GM12878 (cell line): ENCODE measurements at regions of chr4 and their contacts with region 1.

Region 1: DNA sequence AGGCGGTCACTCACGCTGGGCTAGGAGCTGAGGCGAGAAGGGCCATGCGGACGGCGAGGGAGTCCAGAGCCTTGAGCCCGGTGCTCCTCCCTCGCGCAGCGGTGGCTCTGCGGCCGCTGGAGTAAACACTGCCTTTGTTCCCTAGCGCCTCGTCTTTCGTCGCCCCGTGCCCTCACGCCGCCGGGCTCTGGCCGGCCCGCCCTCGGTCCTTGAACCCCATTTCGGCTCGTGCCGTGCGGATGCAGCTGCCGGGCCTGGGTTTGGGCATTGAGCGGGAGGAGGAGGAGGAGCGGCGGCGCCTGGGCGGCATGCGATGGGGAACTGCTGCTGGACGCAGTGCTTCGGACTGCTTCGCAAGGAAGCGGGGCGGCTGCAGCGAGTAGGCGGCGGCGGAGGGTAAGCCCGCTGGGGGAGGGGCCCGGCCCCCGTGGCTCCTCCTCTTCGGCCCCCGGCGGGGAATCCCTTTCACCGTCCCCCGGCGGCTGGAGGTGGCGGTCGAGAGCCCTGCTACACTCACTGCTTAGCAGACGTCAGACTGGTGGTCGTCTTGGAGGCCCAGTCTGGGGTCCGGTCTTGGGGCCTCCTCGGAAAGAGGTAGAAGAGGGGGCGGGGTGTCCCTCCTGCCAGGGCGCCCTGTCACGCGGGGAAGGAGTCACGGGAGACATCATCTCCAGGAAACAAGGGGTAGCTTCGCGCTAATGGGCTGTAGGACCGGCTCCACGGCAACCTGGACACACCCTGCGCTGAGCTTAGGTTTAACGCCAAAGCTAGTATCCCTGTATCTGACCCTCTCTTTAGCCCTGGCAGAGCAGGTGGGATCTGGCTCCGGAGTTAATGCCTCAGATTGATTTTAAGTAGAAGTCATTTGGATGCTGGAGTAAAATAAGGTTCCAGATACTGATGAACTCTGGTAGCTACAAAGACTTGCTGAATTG is at the start of gene AP1AR:
- DNase-seq: peak; percentile 35
- ATAC-seq: peak; percentile 82
- H3K4me3 ChIP-seq: peak within 1 kb of the TSS; percentile 88
- H3K27ac ChIP-seq: peak within 1 kb of the TSS; percentile 93
- H3K4me1 ChIP-seq: no peaks in the 10 kb centered on the region
- H3K27me3 ChIP-seq: no peaks in the 10 kb centered on the region
- CTCF ChIP-seq: peak; percentile 40 to 61 (median 52)
- EP300 ChIP-seq: no peak
- POLR2A ChIP-seq: peak; percentile 94
- RAD21 ChIP-seq: peak; percentile 28; the same call in 1 of the 2 replicates
- polyA plus RNA-seq, gene AP1AR: 5.6 to 7.2 TPM

Region 2: GRCh38 chr4:112099701-112100297 is 132.2 kb before region 1 on chr4:
- CTCF ChIA-PET with region 1: interaction called, 135 read pairs
- POLR2A ChIA-PET with region 1: interaction called, 3 read pairs
- RAD21 ChIA-PET with region 1: interaction called, 90 read pairs
- SMC1A ChIA-PET with region 1: interaction called, 71 read pairs
- in situ Hi-C with region 1: no loop called
- intact Hi-C with region 1: loop called (anchors 1 kb)
- DNase-seq: peak; percentile 27
- ATAC-seq: peak; percentile 93
- H3K4me3 ChIP-seq: no peak overlapping the region
- H3K27ac ChIP-seq: no peak overlapping the region
- H3K4me1 ChIP-seq: no peaks in the 10 kb centered on the region
- H3K27me3 ChIP-seq: no peaks in the 10 kb centered on the region
- CTCF ChIP-seq: peak; percentile 35 to 66 (median 50); a peak in 5 of 6 replicates
- EP300 ChIP-seq: no peak
- POLR2A ChIP-seq: no peak
- RAD21 ChIP-seq: peak; percentile 75

Region 3: DNA sequence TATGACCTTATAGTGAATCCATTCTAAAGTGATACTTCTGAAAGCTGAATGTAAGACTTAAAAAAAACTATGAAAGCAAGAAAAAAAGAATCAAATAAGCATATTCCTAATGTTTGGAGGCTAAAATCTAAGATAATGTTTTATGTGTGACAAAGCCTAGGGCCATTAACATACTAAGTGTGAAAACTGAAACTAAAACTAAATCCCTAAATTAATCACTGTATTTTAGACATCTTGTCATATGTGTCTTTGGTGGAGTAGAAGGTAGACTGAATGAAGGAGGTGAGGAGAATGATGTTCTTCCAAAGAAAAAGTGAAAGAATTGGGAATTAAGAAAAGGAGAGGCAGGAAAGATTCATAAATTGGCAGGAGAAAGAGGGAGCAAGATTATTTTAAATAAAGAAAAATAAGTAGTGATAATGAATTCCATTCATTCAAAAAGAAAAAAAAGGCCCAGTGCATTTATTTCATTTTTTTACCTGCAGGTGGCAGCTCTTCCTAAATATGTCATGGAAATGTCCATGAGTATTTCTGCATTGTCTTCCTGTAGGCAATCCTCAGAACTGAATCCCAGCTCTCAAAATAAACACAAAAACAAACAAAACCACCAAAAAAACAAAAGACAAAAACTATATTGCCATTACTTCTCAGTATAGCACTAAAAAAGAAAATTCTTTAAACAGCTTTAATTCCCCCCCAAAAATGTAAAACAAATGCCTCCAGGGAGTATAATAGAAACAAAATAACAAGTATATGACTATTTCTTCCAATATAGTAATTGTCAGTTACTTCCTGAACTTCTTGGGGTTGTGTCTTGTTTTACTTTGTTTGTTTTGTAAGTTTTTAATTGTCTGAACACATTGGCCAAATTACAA is 17.4 kb before region 1 on chr4:
- CTCF ChIA-PET with region 1: interaction called, 122 read pairs
- POLR2A ChIA-PET with region 1: interaction called, 5 read pairs
- RAD21 ChIA-PET with region 1: interaction called, 60 read pairs
- SMC1A ChIA-PET with region 1: interaction called, 88 read pairs
- in situ Hi-C with region 1: no loop called
- intact Hi-C with region 1: no loop called
- DNase-seq: no peak
- ATAC-seq: peak; percentile 63; the same call in 2 of the 3 replicates
- H3K4me3 ChIP-seq: no peak overlapping the region
- H3K27ac ChIP-seq: no peak overlapping the region
- H3K4me1 ChIP-seq: no peaks in the 10 kb centered on the region
- H3K27me3 ChIP-seq: no peaks in the 10 kb centered on the region
- CTCF ChIP-seq: peak in 2 of 3 experiments; percentile 20 to 49; a peak in 4 of 6 replicates
- EP300 ChIP-seq: no peak
- POLR2A ChIP-seq: no peak
- RAD21 ChIP-seq: peak; percentile 46; the same call in 1 of the 2 replicates

Region 4: GRCh38 chr4:112266821-112267220 is 34.8 kb after region 1 on chr4:
- CTCF ChIA-PET with region 1: interaction called, 10 read pairs
- POLR2A ChIA-PET with region 1: interaction called, 6 read pairs
- RAD21 ChIA-PET with region 1: interaction called, 9 read pairs
- SMC1A ChIA-PET with region 1: interaction called, 12 read pairs
- in situ Hi-C with region 1: no loop called
- intact Hi-C with region 1: no loop called
- DNase-seq: no peak
- ATAC-seq: peak; percentile 53
- H3K4me3 ChIP-seq: no peak overlapping the region
- H3K27ac ChIP-seq: no peak overlapping the region
- H3K4me1 ChIP-seq: no peaks in the 10 kb centered on the region
- H3K27me3 ChIP-seq: no peaks in the 10 kb centered on the region
- CTCF ChIP-seq: peak; percentile 26 to 43 (median 32); a peak in 3 of 6 replicates
- EP300 ChIP-seq: no peak
- POLR2A ChIP-seq: no peak
- RAD21 ChIP-seq: peak; percentile 54

Region 5: GRCh38 chr4:112321776-112322684 is 90.0 kb after region 1 on chr4:
- CTCF ChIA-PET with region 1: interaction called, 16 read pairs
- POLR2A ChIA-PET with region 1: interaction called, 3 read pairs
- RAD21 ChIA-PET with region 1: interaction called, 8 read pairs
- SMC1A ChIA-PET with region 1: interaction called, 38 read pairs
- in situ Hi-C with region 1: no loop called
- intact Hi-C with region 1: loop called (anchors 5 kb)
- DNase-seq: no peak
- ATAC-seq: peak; percentile 44
- H3K4me3 ChIP-seq: no peak overlapping the region
- H3K27ac ChIP-seq: no peak overlapping the region
- H3K4me1 ChIP-seq: peaks cover 29% of the 10 kb centered on the region
- H3K27me3 ChIP-seq: no peaks in the 10 kb centered on the region
- CTCF ChIP-seq: peak; percentile 76 to 87 (median 77)
- EP300 ChIP-seq: no peak
- POLR2A ChIP-seq: no peak
- RAD21 ChIP-seq: peak; percentile 80

Region 6: GRCh38 chr4:112636688-112637551 is 404.9 kb after region 1 on chr4 and contains the starts of genes LARP7 and ZGRF1:
- CTCF ChIA-PET with region 1: no interaction called
- POLR2A ChIA-PET with region 1: no interaction called
- RAD21 ChIA-PET with region 1: interaction called, 4 read pairs
- SMC1A ChIA-PET with region 1: no interaction called
- in situ Hi-C with region 1: no loop called
- intact Hi-C with region 1: loop called (anchors 1 kb)
- DNase-seq: peak; percentile 96
- ATAC-seq: peak; percentile 94
- H3K4me3 ChIP-seq: peak within 1 kb of the TSS; percentile 87
- H3K27ac ChIP-seq: peak within 1 kb of the TSS; percentile 98
- H3K4me1 ChIP-seq: peaks cover 20% of the 10 kb centered on the region
- H3K27me3 ChIP-seq: no peaks in the 10 kb centered on the region
- CTCF ChIP-seq: peak; percentile 86 to 96 (median 95)
- EP300 ChIP-seq: peak in 1 of 2 experiments; percentile 32; a peak in 2 of 4 replicates
- POLR2A ChIP-seq: peak; percentile 77
- RAD21 ChIP-seq: peak; percentile 50
- polyA plus RNA-seq, gene LARP7: 79.0 to 107 TPM
- polyA plus RNA-seq, gene ZGRF1: 8.5 to 9.0 TPM